GM12878 (cell line): ENCODE measurements at regions of chr20 and their contacts with region 1.

Region 1: GRCh38 chr20:20593447-20594170 is 118.8 kb downstream of the RALGAPA2 start:
- DNase-seq: no peak
- ATAC-seq: peak; percentile 93
- H3K4me3 ChIP-seq: no peak overlapping the region
- H3K27ac ChIP-seq: no peak overlapping the region
- H3K4me1 ChIP-seq: no peaks in the 10 kb centered on the region
- H3K27me3 ChIP-seq: no peaks in the 10 kb centered on the region
- CTCF ChIP-seq: peak; percentile 47 to 63 (median 52); a peak in 5 of 6 replicates
- EP300 ChIP-seq: no peak
- POLR2A ChIP-seq: no peak
- RAD21 ChIP-seq: peak; percentile 43

Region 2: GRCh38 chr20:20076297-20077065 is 517.1 kb before region 1 on chr20:
- CTCF ChIA-PET with region 1: no interaction called
- POLR2A ChIA-PET with region 1: no interaction called
- RAD21 ChIA-PET with region 1: no interaction called
- SMC1A ChIA-PET with region 1: no interaction called
- in situ Hi-C with region 1: loop called (anchors 10 kb)
- intact Hi-C with region 1: loop called (anchors 10 kb)
- DNase-seq: no peak
- ATAC-seq: no peak
- H3K4me3 ChIP-seq: no peak overlapping the region
- H3K27ac ChIP-seq: no peak overlapping the region
- H3K4me1 ChIP-seq: no peaks in the 10 kb centered on the region
- H3K27me3 ChIP-seq: peaks cover 0 to 1% of the 10 kb centered on the region in 2 experiments; a peak in 1 of 4 replicates
- CTCF ChIP-seq: no peak
- EP300 ChIP-seq: no peak
- POLR2A ChIP-seq: no peak
- RAD21 ChIP-seq: no peak

Region 3: DNA sequence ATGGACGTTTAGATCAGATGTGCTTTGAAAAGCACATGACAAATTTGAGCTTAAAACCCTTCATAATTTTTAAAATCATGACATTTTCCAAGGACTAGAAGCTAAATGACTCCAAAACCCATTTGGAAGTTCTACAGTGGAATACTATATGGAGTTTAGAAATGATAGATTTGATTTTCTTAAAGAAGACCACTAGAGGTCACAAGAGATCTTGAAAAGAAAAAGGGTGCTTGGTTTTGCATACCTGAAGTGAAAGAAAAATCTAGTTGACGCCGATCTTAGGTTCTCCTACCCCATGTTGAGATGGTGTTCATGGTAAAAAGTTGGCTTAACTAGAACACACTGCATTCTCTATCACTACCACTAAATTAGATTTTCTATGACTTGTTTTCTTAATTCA is 509.8 kb before region 1 on chr20:
- CTCF ChIA-PET with region 1: interaction called, 22 read pairs
- POLR2A ChIA-PET with region 1: no interaction called
- RAD21 ChIA-PET with region 1: interaction called, 7 read pairs
- SMC1A ChIA-PET with region 1: interaction called, 5 read pairs
- in situ Hi-C with region 1: loop called (anchors 10 kb)
- intact Hi-C with region 1: loop called (anchors 10 kb)
- DNase-seq: peak; percentile 2
- ATAC-seq: peak; percentile 81
- H3K4me3 ChIP-seq: no peak overlapping the region
- H3K27ac ChIP-seq: no peak overlapping the region
- H3K4me1 ChIP-seq: no peaks in the 10 kb centered on the region
- H3K27me3 ChIP-seq: no peaks in the 10 kb centered on the region; a peak in 2 of 4 replicates
- CTCF ChIP-seq: peak; percentile 31 to 56 (median 43); a peak in 4 of 6 replicates
- EP300 ChIP-seq: no peak
- POLR2A ChIP-seq: no peak
- RAD21 ChIP-seq: peak; percentile 69

Region 4: GRCh38 chr20:20360464-20360863 is 233.1 kb before region 1 on chr20:
- CTCF ChIA-PET with region 1: interaction called, 18 read pairs
- POLR2A ChIA-PET with region 1: no interaction called
- RAD21 ChIA-PET with region 1: interaction called, 3 read pairs
- SMC1A ChIA-PET with region 1: interaction called, 10 read pairs
- in situ Hi-C with region 1: no loop called
- intact Hi-C with region 1: no loop called
- DNase-seq: no peak
- ATAC-seq: peak; percentile 86
- H3K4me3 ChIP-seq: no peak overlapping the region
- H3K27ac ChIP-seq: no peak overlapping the region
- H3K4me1 ChIP-seq: no peaks in the 10 kb centered on the region
- H3K27me3 ChIP-seq: peaks cover 16 to 28% of the 10 kb centered on the region in 2 experiments
- CTCF ChIP-seq: peak; percentile 69 to 84 (median 78)
- EP300 ChIP-seq: no peak
- POLR2A ChIP-seq: no peak
- RAD21 ChIP-seq: peak; percentile 77

Region 5: GRCh38 chr20:20582734-20583133 is 10.9 kb before region 1 on chr20:
- CTCF ChIA-PET with region 1: interaction called, 25 read pairs
- POLR2A ChIA-PET with region 1: no interaction called
- RAD21 ChIA-PET with region 1: interaction called, 7 read pairs
- SMC1A ChIA-PET with region 1: interaction called, 8 read pairs
- in situ Hi-C with region 1: no loop called
- intact Hi-C with region 1: no loop called
- DNase-seq: no peak
- ATAC-seq: peak; percentile 57; the same call in 2 of the 3 replicates
- H3K4me3 ChIP-seq: no peak overlapping the region
- H3K27ac ChIP-seq: no peak overlapping the region
- H3K4me1 ChIP-seq: no peaks in the 10 kb centered on the region
- H3K27me3 ChIP-seq: no peaks in the 10 kb centered on the region
- CTCF ChIP-seq: no peak
- EP300 ChIP-seq: no peak
- POLR2A ChIP-seq: no peak
- RAD21 ChIP-seq: no peak

Region 6: DNA sequence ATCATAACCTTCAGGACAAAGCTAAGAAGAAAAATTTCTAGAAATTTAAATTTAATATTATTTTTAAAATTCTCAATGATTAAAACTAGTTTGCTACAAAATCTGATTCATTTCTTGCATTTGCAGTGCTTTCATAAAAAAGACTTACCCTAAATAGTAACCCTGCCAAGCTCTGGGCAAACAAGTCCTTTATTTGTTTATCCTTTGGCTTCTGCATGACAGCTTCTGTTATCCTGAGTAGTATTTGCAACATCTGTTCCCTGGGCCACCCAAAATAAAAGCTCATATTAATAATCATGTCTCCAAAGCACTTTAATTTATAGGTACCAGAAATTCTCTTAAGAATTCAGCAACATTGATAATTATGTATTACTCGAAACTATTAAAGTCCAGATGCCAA is 17.6 kb after region 1 on chr20:
- CTCF ChIA-PET with region 1: interaction called, 56 read pairs
- POLR2A ChIA-PET with region 1: interaction called, 3 read pairs
- RAD21 ChIA-PET with region 1: interaction called, 17 read pairs
- SMC1A ChIA-PET with region 1: interaction called, 6 read pairs
- in situ Hi-C with region 1: no loop called
- intact Hi-C with region 1: no loop called
- DNase-seq: no peak
- ATAC-seq: no peak
- H3K4me3 ChIP-seq: no peak overlapping the region
- H3K27ac ChIP-seq: no peak overlapping the region
- H3K4me1 ChIP-seq: no peaks in the 10 kb centered on the region
- H3K27me3 ChIP-seq: no peaks in the 10 kb centered on the region
- CTCF ChIP-seq: no peak
- EP300 ChIP-seq: no peak
- POLR2A ChIP-seq: no peak
- RAD21 ChIP-seq: no peak

Region 7: DNA sequence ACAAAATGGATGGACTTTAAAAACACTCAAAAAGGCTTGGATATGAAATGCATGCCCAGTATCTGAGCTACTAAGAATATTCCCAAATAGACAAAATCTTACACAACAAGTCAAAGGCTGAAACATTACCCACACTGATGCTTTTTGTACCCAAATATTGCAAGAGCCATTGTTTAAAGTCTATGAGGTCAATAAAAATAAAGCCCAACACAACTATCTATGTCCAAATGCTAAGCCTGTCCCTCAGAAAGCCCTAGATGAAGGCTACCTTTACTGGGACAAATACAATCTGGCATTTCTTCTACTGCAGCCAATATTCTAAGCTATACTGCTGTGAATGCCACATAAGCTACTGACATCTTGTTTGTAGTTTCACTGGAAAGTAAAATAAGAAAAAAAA is 64.5 kb after region 1 on chr20:
- CTCF ChIA-PET with region 1: interaction called, 10 read pairs
- POLR2A ChIA-PET with region 1: no interaction called
- RAD21 ChIA-PET with region 1: no interaction called
- SMC1A ChIA-PET with region 1: interaction called, 3 read pairs
- in situ Hi-C with region 1: no loop called
- intact Hi-C with region 1: no loop called
- DNase-seq: no peak
- ATAC-seq: no peak
- H3K4me3 ChIP-seq: no peak overlapping the region
- H3K27ac ChIP-seq: no peak overlapping the region
- H3K4me1 ChIP-seq: no peaks in the 10 kb centered on the region
- H3K27me3 ChIP-seq: no peaks in the 10 kb centered on the region
- CTCF ChIP-seq: no peak
- EP300 ChIP-seq: no peak
- POLR2A ChIP-seq: no peak
- RAD21 ChIP-seq: no peak

Region 8: DNA sequence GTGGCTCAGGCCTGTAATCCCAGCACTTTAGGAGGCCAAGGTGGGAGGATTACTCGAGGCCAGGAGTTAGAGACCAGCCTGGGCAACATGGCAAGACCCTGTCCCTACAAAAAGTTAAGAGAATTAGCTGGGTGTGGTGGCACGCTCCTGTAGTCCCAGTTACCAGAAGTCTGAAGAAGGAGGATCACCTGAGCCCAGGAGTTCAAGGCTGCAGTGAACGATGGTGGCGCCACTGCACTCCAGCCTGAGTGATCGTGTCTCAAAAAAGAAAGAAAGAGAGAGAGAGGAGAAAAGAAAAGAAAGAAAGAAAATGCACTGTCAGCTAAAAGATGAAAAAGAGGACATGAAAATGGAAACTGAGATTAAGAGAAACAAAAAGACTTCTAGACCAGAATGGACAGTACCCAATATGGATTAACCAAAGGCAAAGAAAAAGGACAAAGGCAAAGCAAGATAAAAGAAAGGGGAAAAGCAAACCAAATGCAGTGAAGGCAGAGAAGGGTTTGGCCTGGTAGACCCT is 127.8 kb after region 1 on chr20:
- CTCF ChIA-PET with region 1: no interaction called
- POLR2A ChIA-PET with region 1: no interaction called
- RAD21 ChIA-PET with region 1: no interaction called
- SMC1A ChIA-PET with region 1: no interaction called
- in situ Hi-C with region 1: no loop called
- intact Hi-C with region 1: no loop called
- DNase-seq: no peak
- ATAC-seq: no peak
- H3K4me3 ChIP-seq: no peak overlapping the region
- H3K27ac ChIP-seq: no peak overlapping the region
- H3K4me1 ChIP-seq: 0 out of 2 replicates have a peak, but pooled peaks cover 2% of the 10 kb centered on the region
- H3K27me3 ChIP-seq: no peaks in the 10 kb centered on the region
- CTCF ChIP-seq: no peak
- EP300 ChIP-seq: no peak
- POLR2A ChIP-seq: no peak
- RAD21 ChIP-seq: no peak

Region 9: GRCh38 chr20:21303061-21303871 is 709.7 kb after region 1 on chr20 and contains the start of gene XRN2:
- CTCF ChIA-PET with region 1: no interaction called
- POLR2A ChIA-PET with region 1: no interaction called
- RAD21 ChIA-PET with region 1: no interaction called
- SMC1A ChIA-PET with region 1: no interaction called
- in situ Hi-C with region 1: no loop called
- intact Hi-C with region 1: no loop called
- DNase-seq: peak; percentile 62
- ATAC-seq: peak; percentile 94
- H3K4me3 ChIP-seq: peak within 1 kb of the TSS; percentile 95
- H3K27ac ChIP-seq: peak within 1 kb of the TSS; percentile 90
- H3K4me1 ChIP-seq: no peaks in the 10 kb centered on the region
- H3K27me3 ChIP-seq: no peaks in the 10 kb centered on the region
- CTCF ChIP-seq: peak in 1 of 3 experiments; percentile 11; a peak in 1 of 6 replicates
- EP300 ChIP-seq: no peak
- POLR2A ChIP-seq: peak; percentile 97
- RAD21 ChIP-seq: no peak
- polyA plus RNA-seq, gene XRN2: 59.7 to 69.6 TPM